ENCODE measurements at regions of chr14 and their contacts with region 1.

Region 1: DNA sequence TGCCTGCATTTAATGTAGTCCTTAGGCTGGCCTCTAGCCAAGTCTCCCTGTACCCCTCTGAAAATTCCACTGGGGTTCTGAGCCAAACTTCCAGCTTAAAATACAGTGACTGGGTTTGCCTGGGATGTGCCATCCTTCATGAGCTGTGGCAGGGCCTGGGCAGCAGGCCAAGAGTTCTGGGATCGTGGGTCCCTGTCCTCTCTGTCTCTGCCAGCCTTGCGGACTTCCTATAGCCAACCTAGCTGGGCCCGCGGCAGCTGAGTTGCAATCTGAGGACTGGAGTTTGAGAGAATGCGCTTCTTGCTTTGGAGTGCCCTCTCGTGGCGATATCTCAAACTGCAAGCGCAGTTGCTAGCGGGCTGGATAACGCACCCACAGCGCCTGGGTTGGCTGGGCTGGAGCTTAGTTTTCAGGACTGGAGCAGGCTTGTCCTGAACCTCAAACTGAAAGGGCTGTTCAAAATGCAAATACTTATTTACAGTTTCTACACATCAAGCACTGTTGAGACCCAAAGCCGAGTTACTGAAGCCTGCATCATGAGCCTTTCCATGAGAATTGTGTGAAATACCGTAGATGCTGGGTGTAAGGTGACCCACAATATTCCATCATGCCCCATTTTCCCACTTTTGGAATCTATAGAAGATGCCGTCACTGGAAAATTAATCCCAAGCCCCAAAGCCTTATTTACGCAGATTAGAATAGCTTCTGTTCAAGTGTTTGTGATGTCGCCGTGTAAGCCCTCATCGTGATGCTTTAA is 7.3 kb upstream of the IFI27L2 start:
- DNase-seq: no peak
- H3K4me3 ChIP-seq: no peak overlapping the region
- CTCF ChIP-seq: peak; percentile 96

Region 2: DNA sequence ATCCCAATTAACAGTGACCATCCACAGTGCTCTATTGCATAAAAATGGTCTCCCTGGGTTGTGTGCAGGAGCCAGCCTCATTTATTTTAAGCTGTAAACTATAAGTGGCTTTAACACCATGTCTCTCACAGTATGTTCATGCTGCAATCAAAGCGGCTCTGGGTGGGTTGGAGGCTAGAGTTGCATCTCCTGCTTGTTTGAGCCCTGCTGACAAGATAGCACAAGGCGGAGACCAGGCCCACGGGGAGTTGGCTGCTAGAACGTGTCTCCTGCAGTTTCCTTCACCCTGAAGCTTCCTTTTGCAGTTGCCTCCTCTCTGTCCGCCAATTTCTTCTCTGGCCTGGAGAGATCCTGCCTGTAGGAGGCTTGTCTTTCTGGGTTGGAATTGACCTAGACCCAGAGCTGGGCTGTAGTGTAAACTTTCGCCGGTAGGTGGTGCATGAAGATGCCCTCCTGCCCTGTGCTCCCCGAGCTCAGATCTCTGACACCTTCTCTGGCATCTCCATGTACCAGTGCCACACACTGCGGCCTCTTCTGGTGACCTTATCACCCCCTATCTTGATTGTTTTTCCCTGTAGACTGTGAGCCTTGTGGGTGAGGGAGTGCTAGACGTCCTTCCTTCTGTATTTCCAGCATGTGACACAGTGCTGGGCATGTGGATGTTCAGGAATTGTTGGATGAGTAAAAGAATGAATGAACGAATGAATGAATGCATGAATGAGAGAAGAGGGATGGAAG is 100.3 kb before region 1 on chr14:
- CTCF ChIA-PET with region 1: interaction called, 348 read pairs
- POLR2A ChIA-PET with region 1: no interaction called
- DNase-seq: no peak
- H3K4me3 ChIP-seq: no peak overlapping the region
- CTCF ChIP-seq: peak; percentile 87

Region 3: DNA sequence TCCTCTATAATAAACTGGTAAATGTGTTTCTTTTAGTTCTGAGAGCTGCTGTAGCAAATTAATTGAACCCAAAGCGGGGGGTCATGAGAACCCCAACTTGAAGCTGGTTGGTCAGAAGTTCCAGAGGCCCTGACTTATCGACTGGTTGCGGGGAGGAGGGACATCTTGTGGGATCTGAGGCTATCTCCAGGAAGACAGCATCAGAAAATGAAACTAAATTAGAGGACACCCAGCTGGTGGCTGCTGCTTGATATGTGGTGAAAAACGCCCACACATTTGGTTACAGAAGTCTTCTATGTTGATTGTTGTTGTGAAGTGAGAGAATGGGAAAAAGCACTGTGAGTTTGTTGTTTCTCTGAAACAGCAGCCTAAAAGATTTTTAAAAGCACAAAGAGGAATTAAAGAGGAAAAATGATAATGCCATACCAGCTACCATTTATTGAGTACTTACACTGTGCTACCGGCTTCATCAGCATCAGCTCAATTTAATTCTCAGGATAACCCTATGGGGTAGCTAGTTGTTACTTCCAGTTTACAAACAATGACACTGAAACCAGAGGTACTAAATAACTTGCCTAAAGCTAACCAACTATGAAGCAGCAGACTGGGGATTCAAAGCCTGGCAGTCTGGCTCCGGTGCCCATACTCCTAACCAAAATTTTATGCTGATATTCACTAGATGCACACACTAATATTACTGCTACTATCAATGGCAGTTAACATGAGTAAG is 80.0 kb before region 1 on chr14:
- CTCF ChIA-PET with region 1: interaction called, 143 read pairs
- POLR2A ChIA-PET with region 1: interaction called, 3 read pairs
- DNase-seq: no peak
- H3K4me3 ChIP-seq: no peak overlapping the region
- CTCF ChIP-seq: no peak

Region 4: GRCh38 chr14:94153750-94154342 is 17.1 kb after region 1 on chr14:
- CTCF ChIA-PET with region 1: interaction called, 17 read pairs
- POLR2A ChIA-PET with region 1: no interaction called
- DNase-seq: no peak
- H3K4me3 ChIP-seq: no peak overlapping the region
- CTCF ChIP-seq: no peak

Region 5: GRCh38 chr14:94180655-94181271 is 44.0 kb after region 1 on chr14:
- CTCF ChIA-PET with region 1: interaction called, 39 read pairs
- POLR2A ChIA-PET with region 1: no interaction called
- DNase-seq: no peak
- H3K4me3 ChIP-seq: no peak overlapping the region; the same call in 1 of the 2 replicates
- CTCF ChIP-seq: peak; percentile 8